Dorsolateral prefrontal cortex (tissue), 120 donors: ENCODE measurements at regions of chr12 and their contacts with region 1.

Region 1: DNA sequence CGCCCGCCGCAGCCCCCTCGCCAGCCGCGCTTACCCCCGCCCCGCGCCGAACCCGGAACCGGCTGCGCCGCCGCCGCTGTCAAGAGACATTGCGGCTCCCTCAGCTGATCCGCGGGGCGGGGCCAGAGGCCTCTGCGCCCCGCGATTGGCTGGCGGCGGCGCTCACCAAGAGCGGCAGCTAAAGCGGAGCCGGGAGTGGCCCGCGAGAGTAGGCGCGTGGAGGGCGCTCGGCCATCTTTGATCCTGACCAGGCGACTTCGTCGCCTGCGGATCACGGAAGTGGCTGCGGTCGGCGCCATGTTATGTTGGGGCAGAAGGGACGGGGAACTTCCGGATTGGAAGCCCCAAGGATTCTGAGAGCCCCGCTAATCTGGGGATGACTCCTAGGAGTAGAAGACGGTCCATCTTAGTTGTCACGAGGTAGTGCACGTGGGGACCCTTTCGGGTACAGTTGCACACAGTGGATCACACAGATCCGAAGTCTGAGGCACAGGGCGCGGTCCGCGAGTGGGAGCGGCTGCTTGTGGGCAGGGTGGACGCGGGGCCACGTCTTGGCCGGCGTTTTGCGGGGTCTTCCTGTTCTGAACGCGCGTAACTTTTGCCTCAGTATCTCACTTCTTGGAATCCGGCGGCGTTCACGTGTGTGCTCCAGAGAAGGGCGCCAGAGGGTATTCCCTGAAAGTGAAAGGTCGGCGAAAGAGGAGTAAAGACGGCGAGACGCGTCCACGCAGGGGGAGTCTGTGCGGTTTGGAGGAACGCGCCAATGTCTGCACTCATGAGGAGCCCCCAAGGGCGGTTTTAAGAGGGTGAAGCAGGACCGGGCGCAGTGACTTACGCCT is at the start of gene CHFR:
- DNase-seq: peak; percentile 92 to 98 (median 97)
- H3K4me3 ChIP-seq: peak within 1 kb of the TSS; percentile 65 to 97 (median 88)
- H3K27ac ChIP-seq: peak within 1 kb of the TSS; percentile 51 to 98 (median 94)
- H3K27me3 ChIP-seq: no peaks in the 10 kb centered on the region
- CTCF ChIP-seq: peak in 33 of 56 donors; percentile 3 to 60 (median 19)
- total RNA-seq, gene CHFR: 37.6 to 97.7 (median 65.3) TPM

Region 2: GRCh38 chr12:132638541-132639418 is 249.0 kb before region 1 on chr12:
- intact Hi-C with region 1: no loop called
- DNase-seq: peak in 4 of 10 donors; percentile 11 to 51 (median 46)
- H3K4me3 ChIP-seq: no peak overlapping the region
- H3K27ac ChIP-seq: no peak overlapping the region
- H3K27me3 ChIP-seq: no peaks in the 10 kb centered on the region
- CTCF ChIP-seq: peak in 54 of 56 donors; percentile 37 to 80 (median 64)

Region 3: DNA sequence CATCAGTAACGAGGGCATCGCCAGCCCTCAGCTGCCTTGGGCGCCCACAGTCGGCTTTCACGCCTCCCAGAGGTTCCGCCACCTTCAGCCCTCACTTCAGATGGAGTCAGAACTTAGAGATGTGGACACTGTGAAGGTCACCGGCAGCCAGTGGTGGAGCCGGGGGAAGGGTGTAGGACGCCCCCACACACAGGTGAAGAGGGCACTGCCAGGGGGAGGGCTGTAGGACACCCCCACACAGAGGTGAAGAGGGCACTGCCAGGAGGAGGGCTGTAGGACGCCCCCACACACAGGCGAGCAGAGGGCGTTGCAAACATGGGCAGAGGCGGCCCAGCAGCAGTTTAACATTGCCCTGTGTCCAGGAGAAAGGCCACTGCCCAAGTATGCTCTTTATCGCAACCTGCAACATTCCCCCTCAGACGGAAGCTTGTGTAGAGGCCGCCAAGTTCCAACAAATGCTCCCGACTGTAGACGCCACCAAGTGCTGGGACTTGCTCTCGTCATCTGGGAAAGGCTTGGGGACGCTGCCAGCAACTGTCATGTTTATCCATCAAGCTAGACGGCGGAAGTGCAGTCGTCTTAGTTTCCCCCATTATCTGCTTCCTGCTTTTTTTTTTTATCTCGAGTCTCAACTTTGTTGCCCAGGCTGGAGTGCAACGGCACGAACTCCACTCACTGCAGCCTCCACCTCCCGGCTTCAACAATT is 121.2 kb before region 1 on chr12:
- intact Hi-C with region 1: loop called in 1 of 2 experiments (anchors 5 kb)
- DNase-seq: peak in 2 of 10 donors; percentile 32 to 54
- H3K4me3 ChIP-seq: no peak overlapping the region
- H3K27ac ChIP-seq: peak overlapping the region in 27 of 59 donors; percentile 0 to 61 (median 42)
- H3K27me3 ChIP-seq: no peaks in the 10 kb centered on the region
- CTCF ChIP-seq: no peak

Region 4: GRCh38 chr12:132828706-132829534 is 58.8 kb before region 1 on chr12 and contains the start of gene GOLGA3:
- intact Hi-C with region 1: loop called (anchors 2 kb)
- DNase-seq: peak; percentile 89 to 95 (median 92)
- H3K4me3 ChIP-seq: peak within 1 kb of the TSS; percentile 51 to 100 (median 91)
- H3K27ac ChIP-seq: peak within 1 kb of the TSS; percentile 64 to 100 (median 98)
- H3K27me3 ChIP-seq: no peaks in the 10 kb centered on the region
- CTCF ChIP-seq: peak in 13 of 56 donors; percentile 6 to 50 (median 26)
- total RNA-seq, gene GOLGA3: 46.0 to 96.5 (median 63.7) TPM

Region 5: GRCh38 chr12:132908145-132909044 is 20.7 kb after region 1 on chr12:
- intact Hi-C with region 1: loop called (anchors 2 kb)
- DNase-seq: peak; percentile 88 to 98 (median 98)
- H3K4me3 ChIP-seq: peak overlapping the region; percentile 37 to 90 (median 76)
- H3K27ac ChIP-seq: peak overlapping the region in 54 of 59 donors; percentile 14 to 88 (median 74)
- H3K27me3 ChIP-seq: no peaks in the 10 kb centered on the region
- CTCF ChIP-seq: peak in 12 of 56 donors; percentile 6 to 35 (median 27)

Region 6: DNA sequence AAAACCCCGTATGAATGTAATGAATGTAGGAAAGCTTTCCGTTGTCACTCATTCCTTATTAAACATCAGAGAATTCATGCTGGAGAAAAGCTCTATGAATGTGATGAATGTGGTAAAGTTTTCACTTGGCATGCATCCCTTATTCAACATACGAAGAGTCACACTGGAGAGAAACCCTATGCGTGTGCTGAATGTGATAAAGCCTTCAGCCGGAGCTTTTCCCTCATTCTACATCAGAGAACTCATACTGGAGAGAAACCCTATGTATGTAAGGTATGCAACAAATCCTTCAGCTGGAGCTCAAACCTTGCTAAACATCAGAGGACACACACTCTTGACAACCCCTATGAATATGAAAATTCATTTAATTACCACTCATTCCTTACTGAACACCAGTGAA is 218.5 kb after region 1 on chr12:
- intact Hi-C with region 1: no loop called
- DNase-seq: no peak
- H3K4me3 ChIP-seq: no peak overlapping the region
- H3K27ac ChIP-seq: no peak overlapping the region
- H3K27me3 ChIP-seq: no peaks in the 10 kb centered on the region
- CTCF ChIP-seq: no peak